ENCODE measurements at regions of chr2 and their contacts with region 1.

Region 1: GRCh38 chr2:238784671-238785527 is 63.0 kb upstream of the TWIST2 start:
- DNase-seq: peak; percentile 45 to 78 (median 56)
- ATAC-seq: peak in 3 of 4 donors; percentile 62 to 87 (median 78)
- H3K4me3 ChIP-seq: peak overlapping the region in 3 of 12 donors; percentile 2 to 13 (median 8)
- H3K27ac ChIP-seq: peak overlapping the region in 1 of 12 donors; percentile 19
- H3K4me1 ChIP-seq: no peaks in the 10 kb centered on the region
- H3K27me3 ChIP-seq: peaks cover 0 to 7% (median 0%) of the 10 kb centered on the region in 9 donors
- CTCF ChIP-seq: peak; percentile 76 to 89 (median 84)
- POLR2A ChIP-seq: no peak

Region 2: DNA sequence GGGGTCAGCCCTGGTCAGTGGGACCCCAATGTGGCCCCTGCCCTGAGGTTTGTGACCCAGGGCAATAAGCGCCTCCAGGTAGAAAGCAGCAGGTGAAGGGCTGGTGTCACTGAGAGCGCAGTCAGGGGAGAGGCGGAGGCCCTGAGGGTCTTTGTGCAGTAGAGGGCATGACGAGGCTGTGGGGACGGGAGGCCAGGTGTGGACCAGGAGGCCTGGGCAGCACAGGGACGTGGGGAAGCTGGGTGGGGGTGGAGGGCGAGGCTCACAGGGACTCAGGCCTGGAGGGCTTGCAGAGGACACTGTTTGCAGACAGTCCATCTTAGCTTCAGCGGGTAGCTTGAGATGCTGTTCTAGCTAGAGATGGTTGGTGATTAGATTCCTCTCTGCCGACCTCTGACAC is 432.5 kb before region 1 on chr2:
- intact Hi-C with region 1: loop called in 6 of 10 experiments (anchors 5 to 10 kb)
- DNase-seq: no peak
- ATAC-seq: peak in 1 of 4 donors; percentile 15
- H3K4me3 ChIP-seq: no peak overlapping the region
- H3K27ac ChIP-seq: no peak overlapping the region
- H3K4me1 ChIP-seq: no peaks in the 10 kb centered on the region
- H3K27me3 ChIP-seq: no peaks in the 10 kb centered on the region
- CTCF ChIP-seq: no peak
- POLR2A ChIP-seq: no peak

Region 3: DNA sequence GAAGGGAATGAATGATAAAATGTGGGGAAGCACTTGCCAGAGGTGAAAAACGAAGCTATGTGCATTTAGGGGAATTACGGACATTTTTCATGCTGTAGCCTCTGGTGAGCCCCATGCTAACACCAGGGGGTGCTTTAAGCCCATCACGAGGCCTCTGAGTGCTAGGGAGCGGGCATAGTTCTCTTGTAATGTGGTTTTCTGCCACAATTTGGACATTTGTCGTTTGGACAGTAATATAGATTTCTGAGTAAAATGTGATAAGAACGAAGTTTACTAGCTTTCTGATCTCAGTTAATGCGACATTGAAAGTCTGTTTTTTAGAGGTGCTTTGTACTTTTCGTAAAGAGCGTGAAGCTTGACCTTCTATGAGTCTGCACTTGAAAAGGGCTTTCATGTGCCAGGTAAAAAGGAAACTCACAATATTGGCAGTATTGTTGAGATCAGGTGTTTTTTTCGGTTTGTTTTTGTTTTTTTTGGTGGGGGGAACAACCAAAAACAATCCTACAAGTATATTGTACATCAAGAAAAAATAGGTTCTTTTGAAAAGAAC is 414.0 kb before region 1 on chr2:
- intact Hi-C with region 1: loop called in 6 of 10 experiments (anchors 5 to 10 kb)
- DNase-seq: peak; percentile 46 to 72 (median 53)
- ATAC-seq: peak; percentile 83 to 97 (median 94)
- H3K4me3 ChIP-seq: no peak overlapping the region
- H3K27ac ChIP-seq: no peak overlapping the region
- H3K4me1 ChIP-seq: no peaks in the 10 kb centered on the region
- H3K27me3 ChIP-seq: no peaks in the 10 kb centered on the region
- CTCF ChIP-seq: peak; percentile 34 to 85 (median 78)
- POLR2A ChIP-seq: no peak

Region 4: DNA sequence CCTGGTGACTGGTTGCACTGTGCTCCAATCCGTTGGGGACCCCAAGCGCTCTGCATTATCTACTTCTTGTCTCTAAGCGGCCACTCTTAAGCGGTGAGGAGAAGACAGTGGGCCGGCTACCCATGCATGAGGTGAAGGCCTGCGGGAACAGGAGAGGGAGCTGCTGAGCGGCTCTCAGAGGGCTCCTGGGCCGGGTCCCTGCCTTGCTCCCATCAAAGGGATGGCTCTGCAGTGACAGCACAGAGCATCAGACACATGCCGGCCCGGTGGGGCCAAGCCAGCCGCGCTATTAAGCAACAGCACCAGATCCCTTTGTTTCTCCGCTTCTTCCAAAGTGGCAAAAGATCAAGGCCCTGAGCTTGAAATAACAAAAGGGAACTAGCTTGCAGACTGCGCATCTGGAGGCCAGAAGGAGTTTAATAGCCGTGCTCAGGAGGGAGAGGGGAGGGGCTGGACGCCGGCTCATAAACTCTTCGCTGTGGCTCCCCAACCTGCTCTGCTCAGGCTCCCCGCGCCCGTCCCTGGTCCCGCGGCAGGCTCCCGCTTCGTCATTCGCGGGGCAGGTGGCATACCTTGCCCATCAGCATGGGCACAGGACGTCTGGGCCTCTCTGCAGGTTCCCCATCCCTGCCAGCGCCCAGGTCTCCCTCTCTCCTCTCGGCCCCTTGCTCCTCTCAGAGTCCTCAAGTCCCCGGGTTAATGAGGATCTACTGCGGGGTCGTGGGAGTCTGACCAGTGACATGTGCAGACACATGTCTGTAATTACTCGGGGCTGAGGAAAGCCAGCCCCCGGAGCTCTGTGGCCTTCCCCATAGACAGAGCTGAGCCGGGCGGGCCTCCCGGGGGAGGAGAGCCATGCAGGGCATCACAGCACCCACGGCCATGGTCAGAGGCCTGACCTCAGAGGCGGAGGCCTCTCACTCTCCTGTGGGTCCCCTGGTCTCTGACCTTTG is 261.5 kb before region 1 on chr2:
- intact Hi-C with region 1: loop called in 5 of 10 experiments (anchors 5 to 10 kb)
- DNase-seq: peak in 1 of 5 donors; percentile 38
- ATAC-seq: peak in 3 of 4 donors; percentile 60 to 63 (median 62)
- H3K4me3 ChIP-seq: no peak overlapping the region
- H3K27ac ChIP-seq: peak overlapping the region in 1 of 12 donors; percentile 53
- H3K4me1 ChIP-seq: no peaks in the 10 kb centered on the region
- H3K27me3 ChIP-seq: peaks cover 0 to 23% (median 0%) of the 10 kb centered on the region in 9 donors
- CTCF ChIP-seq: peak in 5 of 12 donors; percentile 14 to 34 (median 23)
- POLR2A ChIP-seq: no peak

Region 5: DNA sequence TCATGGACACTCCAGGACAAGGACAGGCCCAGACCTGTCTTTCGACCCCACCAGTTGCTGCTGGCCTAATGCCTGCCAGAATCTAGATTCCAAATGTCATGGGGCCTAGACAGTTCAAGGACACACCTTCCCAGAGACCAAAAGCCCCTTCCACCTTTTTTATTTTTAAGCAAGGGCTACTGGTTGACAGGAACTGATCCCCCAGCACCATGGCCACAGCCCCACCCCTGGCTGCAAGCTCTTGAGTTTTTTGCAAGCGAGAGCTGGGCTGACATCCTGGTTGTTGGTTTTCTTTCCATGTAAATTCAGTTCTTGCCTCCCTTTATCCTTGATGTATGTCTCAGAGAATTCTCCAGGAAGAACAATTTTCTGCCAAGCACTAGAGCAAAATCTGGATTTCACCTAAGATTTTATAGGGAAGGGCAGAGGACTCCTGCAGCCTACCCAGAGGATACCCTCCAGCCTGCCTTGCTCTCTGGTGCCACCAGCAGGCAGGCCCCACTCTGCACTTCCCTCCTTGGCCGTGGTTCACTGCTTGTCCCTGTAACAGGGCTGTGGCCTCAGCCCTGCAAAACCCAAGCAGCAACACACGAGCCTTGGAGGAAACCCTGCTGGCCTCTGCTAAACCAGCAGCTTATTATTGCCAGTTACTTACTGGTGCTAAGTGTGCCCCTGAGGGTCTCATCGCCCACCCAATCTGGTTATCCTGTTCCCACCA is 160.7 kb after region 1 on chr2:
- intact Hi-C with region 1: loop called in 1 of 10 experiments (anchors 10 kb)
- DNase-seq: peak in 4 of 5 donors; percentile 32 to 70 (median 42)
- ATAC-seq: peak; percentile 76 to 85 (median 80)
- H3K4me3 ChIP-seq: no peak overlapping the region
- H3K27ac ChIP-seq: no peak overlapping the region
- H3K4me1 ChIP-seq: peaks cover 0 to 12% (median 0%) of the 10 kb centered on the region in 12 donors
- H3K27me3 ChIP-seq: peaks cover 0 to 3% (median 0%) of the 10 kb centered on the region in 9 donors
- CTCF ChIP-seq: peak; percentile 39 to 73 (median 60)
- POLR2A ChIP-seq: no peak

Measured in heart left ventricle (tissue), 16 donors.